PC-9 (cell line): ENCODE measurements at regions of chr9 and their contacts with region 1.

Region 1: DNA sequence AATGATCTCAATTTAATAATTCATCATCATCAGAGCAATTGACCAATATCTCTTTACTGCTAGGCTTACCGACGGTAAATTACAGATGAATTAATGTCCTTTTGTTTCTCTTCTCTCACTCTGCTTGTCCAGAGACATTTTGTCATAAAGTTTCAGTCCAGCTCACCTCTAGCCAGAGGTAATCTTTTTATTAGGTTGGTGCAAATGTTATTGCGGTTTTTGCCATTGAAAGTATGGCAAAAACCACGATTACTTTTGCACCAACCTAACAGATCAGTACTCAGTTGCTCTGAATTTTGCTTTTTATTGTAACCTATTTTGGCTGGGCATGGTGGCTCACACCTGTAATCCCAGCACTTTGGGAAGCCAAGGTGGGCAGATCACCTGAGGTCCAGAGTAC is 166.9 kb upstream of the PCSK5 start:
- DNase-seq: no peak
- H3K4me3 ChIP-seq: no peak overlapping the region
- H3K27ac ChIP-seq: no peak overlapping the region
- H3K4me1 ChIP-seq: no peaks in the 10 kb centered on the region
- H3K27me3 ChIP-seq: no peaks in the 10 kb centered on the region
- CTCF ChIP-seq: no peak

Region 2: DNA sequence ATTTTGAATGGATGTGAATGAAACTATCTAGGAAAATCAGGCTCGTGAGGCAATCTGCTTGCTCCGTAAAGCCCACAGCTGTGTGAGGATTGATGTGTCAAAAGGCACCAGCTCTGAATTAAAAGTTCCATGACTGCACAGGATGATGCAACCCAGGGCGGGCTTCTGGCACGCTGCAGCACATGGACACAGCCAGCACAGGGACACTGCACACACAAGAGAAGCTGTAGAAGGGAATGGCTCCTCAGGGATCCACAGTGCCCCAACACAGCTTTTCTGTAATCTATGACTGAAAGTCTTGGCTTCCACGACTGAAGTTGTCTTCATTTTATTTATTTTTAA is 886.4 kb after region 1 on chr9:
- CTCF ChIA-PET with region 1: no interaction called
- POLR2A ChIA-PET with region 1: interaction called, 12 read pairs
- intact Hi-C with region 1: no loop called
- DNase-seq: no peak
- H3K4me3 ChIP-seq: no peak overlapping the region
- H3K27ac ChIP-seq: no peak overlapping the region
- H3K4me1 ChIP-seq: no peaks in the 10 kb centered on the region
- H3K27me3 ChIP-seq: no peaks in the 10 kb centered on the region
- CTCF ChIP-seq: no peak